Activated naive CD4-positive, alpha-beta T cell treated with anti-CD3 and anti-CD28 coated beads for 36 hours (primary cell): ENCODE measurements at regions of chr6 and their contacts with region 1.

Region 1: DNA sequence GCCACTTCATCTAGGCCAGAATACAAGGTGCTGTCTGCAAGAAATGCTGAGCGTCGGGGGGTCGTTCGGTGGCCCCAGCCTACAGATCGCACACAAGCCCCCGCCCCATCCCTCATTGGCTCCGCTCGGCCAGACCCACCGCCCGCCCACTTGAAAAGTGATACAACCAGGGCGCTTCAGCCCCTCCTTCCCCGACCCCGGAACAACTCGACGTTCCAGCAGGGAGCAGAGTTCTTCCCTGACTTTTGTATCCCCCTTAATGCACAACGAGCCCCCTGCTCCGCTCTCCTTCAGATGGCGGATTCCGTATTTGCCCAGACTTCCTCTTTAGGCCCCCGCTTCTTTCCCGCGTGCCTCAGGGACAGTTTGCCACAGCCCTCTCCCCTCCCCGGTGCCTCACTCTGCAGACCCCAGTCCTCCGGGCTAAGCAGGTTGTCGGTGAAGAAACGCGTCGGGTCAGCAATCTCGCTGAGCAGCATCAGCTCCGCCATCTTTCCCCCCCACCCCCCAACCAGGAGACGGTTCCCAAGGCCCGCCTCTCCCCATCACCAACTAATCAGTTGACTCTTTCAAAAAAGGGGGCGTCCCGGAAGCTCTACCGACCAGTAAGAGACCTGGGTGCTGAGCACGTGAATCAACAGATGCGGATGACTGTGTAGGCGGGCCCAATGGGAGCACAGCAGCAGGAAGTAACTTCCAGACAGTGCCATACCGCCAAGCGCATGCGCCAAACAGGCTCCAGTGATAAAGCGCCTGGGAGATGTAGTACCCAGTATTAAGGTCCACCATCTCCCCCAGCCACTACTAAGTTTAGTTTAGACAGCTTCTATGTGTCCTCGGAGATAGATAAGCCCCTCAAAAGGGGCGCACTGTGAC is at the start of gene ATF6B:
- DNase-seq: peak; percentile 99
- H3K4me3 Mint-ChIP-seq: peak within 1 kb of the TSS; percentile 100
- H3K27ac Mint-ChIP-seq: peak within 1 kb of the TSS; percentile 96
- H3K4me1 Mint-ChIP-seq: peaks cover 43% of the 10 kb centered on the region
- H3K27me3 Mint-ChIP-seq: no peaks in the 10 kb centered on the region
- total RNA-seq, gene ATF6B: 68.2 to 69.4 TPM

Region 2: GRCh38 chr6:31901953-31902643 is 225.9 kb before region 1 on chr6 and contains the start of gene ZBTB12:
- CTCF ChIA-PET with region 1: no interaction called
- intact Hi-C with region 1: loop called (anchors 2 kb)
- DNase-seq: peak; percentile 87
- H3K4me3 Mint-ChIP-seq: peak within 1 kb of the TSS; percentile 82
- H3K27ac Mint-ChIP-seq: peak within 1 kb of the TSS; percentile 81
- H3K4me1 Mint-ChIP-seq: peaks cover 29% of the 10 kb centered on the region
- H3K27me3 Mint-ChIP-seq: no peaks in the 10 kb centered on the region
- total RNA-seq, gene ZBTB12: 0.57 to 0.69 TPM

Region 3: DNA sequence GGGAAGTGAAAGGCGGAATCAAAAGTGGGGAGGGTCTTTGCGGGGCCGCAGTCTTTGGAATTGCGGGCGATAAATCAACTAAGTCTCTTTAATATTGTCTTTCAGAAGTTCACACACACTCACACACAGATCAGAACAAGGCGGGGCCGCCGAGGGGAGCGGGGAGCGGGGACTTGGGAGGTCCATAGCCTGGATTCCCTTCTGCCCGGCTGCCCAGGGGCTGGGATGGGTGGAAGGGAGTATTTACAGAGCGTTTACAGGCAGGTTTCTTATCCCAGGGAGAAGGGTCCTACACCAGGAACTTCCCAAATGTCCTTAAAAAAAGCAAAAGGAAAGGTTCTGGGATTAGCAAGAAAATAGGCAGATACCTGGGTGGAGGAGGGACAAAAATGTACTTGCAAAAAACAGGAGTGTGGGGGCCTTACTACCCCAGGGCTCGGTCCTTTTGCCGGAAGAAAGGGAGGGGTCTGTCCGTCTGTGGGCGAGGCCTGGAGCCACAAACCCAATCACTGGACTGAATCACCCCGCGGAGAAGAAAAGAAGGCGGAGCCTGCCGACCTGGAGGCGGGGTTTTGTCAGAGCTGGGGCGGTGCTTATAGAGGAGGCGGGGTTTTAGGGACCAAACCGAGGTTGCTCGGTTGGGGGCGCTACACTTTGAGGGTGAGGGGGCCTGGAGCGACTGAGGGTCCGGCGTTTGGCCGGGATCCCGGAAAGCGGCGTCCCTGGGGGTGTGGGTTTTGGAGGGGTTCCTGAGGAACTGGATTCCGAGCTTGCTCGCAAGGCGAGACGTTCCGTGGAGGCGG is 20.5 kb after region 1 on chr6:
- CTCF ChIA-PET with region 1: interaction called, 3 read pairs
- intact Hi-C with region 1: loop called (anchors 1 kb)
- DNase-seq: peak; percentile 89
- H3K4me3 Mint-ChIP-seq: peak overlapping the region; percentile 76
- H3K27ac Mint-ChIP-seq: peak overlapping the region; percentile 28
- H3K4me1 Mint-ChIP-seq: peaks cover 44% of the 10 kb centered on the region
- H3K27me3 Mint-ChIP-seq: peaks cover 8% of the 10 kb centered on the region

Region 4: GRCh38 chr6:32177788-32178546 is 50.0 kb after region 1 on chr6 and contains the start of gene RNF5:
- CTCF ChIA-PET with region 1: no interaction called
- intact Hi-C with region 1: loop called (anchors 1 kb)
- DNase-seq: peak; percentile 97
- H3K4me3 Mint-ChIP-seq: peak within 1 kb of the TSS; percentile 91
- H3K27ac Mint-ChIP-seq: peak within 1 kb of the TSS; percentile 96
- H3K4me1 Mint-ChIP-seq: peaks cover 61% of the 10 kb centered on the region
- H3K27me3 Mint-ChIP-seq: no peaks in the 10 kb centered on the region
- total RNA-seq, gene RNF5: 39.5 to 39.9 TPM

Region 5: DNA sequence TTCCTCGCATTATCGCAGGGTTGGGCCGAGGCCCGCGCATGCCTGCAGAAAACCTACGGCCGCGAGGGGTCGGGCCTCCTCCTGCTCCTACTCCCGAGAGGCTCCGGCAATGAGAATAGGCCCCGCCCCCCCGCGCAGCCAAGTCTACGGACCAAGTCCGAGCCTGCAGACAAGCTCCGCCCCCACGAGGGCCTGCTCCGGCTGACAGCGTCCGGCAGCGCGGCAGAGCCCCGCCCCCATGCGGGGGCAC is 67.6 kb after region 1 on chr6:
- CTCF ChIA-PET with region 1: interaction called, 5 read pairs
- intact Hi-C with region 1: loop called (anchors 1 kb)
- DNase-seq: peak; percentile 100
- H3K4me3 Mint-ChIP-seq: peak overlapping the region; percentile 97
- H3K27ac Mint-ChIP-seq: peak overlapping the region; percentile 95
- H3K4me1 Mint-ChIP-seq: peaks cover 36% of the 10 kb centered on the region
- H3K27me3 Mint-ChIP-seq: no peaks in the 10 kb centered on the region

Region 6: DNA sequence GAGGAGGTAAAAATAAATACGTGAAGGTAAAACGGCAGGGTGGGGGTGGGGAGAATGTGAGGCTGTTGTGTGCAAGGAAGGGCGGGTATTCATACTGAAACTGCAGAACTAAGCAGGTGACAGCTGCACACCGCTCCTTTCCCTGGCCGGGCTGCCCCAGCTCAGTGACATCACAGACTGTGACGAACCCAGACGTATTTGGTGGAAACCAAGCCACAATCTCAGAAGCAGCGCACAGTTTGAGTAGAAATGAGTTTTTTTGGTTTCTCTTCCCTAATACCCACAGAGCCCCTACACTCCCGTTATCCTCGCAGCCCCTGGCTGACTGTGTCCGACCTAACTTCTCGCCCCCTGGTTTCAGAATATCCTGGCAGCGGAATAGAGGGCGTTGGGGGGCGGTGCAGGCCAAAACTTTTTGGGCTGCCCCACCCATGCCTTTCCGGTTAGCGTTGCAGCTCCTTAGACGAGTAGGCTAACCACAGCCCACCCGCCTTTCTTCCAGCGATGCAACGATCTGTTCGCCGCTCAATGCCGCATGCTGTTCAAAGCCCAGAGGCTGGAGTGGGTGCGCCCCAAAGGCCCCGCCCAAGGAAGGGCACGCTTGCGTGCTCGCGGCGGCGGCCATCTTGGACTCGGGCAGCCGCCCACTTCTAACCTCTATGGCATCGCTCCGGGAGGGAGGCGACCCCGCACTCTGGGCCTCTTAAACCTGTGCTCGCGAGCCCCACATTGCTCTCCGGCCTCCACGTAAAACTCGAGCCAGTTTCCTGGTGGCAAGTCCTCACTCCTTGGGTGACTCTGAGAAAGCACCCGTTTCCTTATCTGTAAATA is 1443.1 kb after region 1 on chr6:
- CTCF ChIA-PET with region 1: no interaction called
- intact Hi-C with region 1: loop called (anchors 5 kb)
- DNase-seq: peak; percentile 98
- H3K4me3 Mint-ChIP-seq: peak overlapping the region; percentile 90
- H3K27ac Mint-ChIP-seq: peak overlapping the region; percentile 100
- H3K4me1 Mint-ChIP-seq: peaks cover 53% of the 10 kb centered on the region
- H3K27me3 Mint-ChIP-seq: no peaks in the 10 kb centered on the region